AG04450 (cell line): ENCODE measurements at regions of chr3 and their contacts with region 1.

Region 1: DNA sequence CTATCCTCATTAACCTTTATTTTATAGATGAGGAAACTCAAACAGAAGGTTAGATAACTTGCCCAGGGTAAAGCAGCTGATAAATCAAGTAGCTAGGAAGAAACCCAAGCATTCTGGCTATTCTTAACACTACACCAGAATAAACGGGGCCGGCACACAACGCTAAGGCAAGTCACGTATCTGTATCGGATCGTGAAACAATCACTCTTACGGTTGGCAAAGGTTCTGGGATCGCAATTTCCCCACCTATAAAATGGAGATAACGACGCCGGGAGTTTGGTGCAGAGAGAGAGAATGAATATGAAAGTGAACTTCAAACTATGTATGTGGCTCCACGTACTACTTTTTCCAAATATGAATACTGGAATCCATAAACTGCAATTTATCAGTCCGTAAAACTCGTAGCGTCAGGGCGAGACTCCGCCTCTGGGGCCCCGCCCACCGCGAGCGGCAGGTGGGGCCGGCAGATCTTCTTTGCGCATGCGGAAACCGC is 252 bp upstream of the ARMC8 start:
- DNase-seq: peak; percentile 50
- H3K4me3 ChIP-seq: peak overlapping the region; percentile 72
- H3K27ac ChIP-seq: peak overlapping the region; percentile 96
- H3K27me3 ChIP-seq: peaks cover 7% of the 10 kb centered on the region
- CTCF ChIP-seq: no peak

Region 2: DNA sequence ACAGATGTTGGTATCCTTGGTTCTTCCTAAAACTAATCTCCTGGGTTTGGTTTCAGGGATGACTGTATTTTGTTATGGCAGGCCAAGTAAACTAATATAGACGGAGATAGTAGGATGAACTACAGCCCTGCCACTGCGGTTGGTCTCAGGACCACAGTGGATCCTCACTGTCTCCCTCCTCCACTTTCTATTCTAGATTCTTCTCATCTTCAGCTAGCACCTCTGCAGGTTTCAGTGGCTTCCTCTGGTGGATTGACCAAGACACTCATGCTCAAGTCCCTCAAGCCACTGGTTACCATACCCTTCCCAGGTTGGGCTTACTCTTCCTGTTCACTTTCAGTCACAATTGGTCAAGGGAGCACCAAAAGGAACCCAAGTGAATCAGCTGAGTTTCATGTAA is 248.0 kb before region 1 on chr3:
- CTCF ChIA-PET with region 1: no interaction called
- POLR2A ChIA-PET with region 1: no interaction called
- DNase-seq: no peak
- H3K4me3 ChIP-seq: no peak overlapping the region
- H3K27ac ChIP-seq: no peak overlapping the region
- H3K27me3 ChIP-seq: no peaks in the 10 kb centered on the region
- CTCF ChIP-seq: no peak

Region 3: DNA sequence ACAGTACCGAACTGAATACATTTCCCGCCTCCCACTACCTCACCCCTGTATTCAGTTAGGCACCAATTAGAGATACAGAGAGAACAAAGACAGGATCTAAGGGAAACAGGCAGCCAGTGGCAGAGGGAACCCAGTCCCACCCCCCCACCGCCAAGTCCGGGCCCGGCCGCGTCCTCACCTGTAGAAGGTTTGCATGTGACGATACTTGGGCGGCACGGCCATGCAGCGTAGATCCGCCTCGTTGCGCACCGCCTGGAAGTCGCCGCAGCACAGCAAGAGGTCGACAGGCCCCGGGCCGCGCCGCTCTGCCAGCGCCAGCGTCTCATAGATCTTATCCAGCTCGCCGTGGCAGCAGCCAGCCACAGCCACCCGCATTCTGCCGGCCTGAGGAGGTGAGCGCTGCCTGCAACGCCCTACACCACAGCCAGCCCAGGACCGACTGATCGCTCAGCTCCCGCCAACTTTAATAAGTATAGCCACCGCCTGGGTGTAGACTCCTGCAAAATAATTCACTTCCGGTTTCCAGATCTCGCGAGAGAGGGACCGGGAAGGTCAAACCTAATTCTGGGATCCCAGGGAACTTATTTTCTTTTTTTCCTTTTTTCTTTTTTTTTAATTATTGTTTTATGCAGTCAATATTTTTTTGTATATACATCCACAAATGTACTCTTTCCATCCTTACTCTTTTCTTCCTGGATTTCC is 12.3 kb before region 1 on chr3 and contains the start of gene DBR1:
- CTCF ChIA-PET with region 1: interaction called, 4 read pairs
- POLR2A ChIA-PET with region 1: interaction called, 15 read pairs
- DNase-seq: peak; percentile 61
- H3K4me3 ChIP-seq: peak within 1 kb of the TSS; percentile 92
- H3K27ac ChIP-seq: peak within 1 kb of the TSS; percentile 55
- H3K27me3 ChIP-seq: no peaks in the 10 kb centered on the region
- CTCF ChIP-seq: no peak
- polyA plus RNA-seq, gene DBR1: 10.5 and 12.8 TPM in 2 replicates

Region 4: DNA sequence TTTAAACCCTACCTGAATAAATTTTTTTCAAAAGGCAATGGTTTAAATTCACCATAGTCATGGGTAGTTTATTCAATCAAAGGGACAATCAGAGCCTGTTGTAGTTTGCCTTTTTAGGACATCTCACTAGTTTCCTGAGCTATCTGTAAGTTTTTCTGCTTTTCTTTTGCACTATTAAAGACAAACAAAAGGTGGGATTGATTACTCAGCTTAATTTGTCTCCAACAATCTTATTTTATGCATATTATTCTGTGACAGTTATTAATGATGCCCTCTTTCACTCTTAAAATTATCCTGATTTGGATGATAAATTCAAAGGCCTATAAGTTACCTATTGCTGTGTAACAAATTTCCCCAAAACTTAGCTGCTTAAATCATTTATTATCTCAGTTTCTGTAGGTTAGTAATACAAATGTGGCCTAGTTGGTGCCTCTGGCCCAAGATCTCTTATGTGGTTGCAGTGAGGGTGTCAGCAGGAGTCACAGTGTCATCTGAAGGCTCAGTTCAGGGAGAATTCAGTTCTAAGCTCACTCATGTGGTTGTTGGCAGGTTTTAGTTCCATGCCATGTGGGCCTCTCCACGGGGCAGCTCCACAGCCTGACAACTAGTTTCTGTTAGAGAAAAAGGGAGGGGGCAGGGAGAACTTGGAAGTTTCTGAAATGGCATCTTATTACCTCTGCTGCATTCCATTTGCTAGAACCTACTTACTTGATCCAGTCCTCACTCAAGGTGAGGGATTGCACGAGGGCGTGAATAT is 16.3 kb after region 1 on chr3:
- CTCF ChIA-PET with region 1: no interaction called
- POLR2A ChIA-PET with region 1: no interaction called
- DNase-seq: no peak
- H3K4me3 ChIP-seq: no peak overlapping the region
- H3K27ac ChIP-seq: no peak overlapping the region
- H3K27me3 ChIP-seq: no peaks in the 10 kb centered on the region
- CTCF ChIP-seq: no peak

Region 5: DNA sequence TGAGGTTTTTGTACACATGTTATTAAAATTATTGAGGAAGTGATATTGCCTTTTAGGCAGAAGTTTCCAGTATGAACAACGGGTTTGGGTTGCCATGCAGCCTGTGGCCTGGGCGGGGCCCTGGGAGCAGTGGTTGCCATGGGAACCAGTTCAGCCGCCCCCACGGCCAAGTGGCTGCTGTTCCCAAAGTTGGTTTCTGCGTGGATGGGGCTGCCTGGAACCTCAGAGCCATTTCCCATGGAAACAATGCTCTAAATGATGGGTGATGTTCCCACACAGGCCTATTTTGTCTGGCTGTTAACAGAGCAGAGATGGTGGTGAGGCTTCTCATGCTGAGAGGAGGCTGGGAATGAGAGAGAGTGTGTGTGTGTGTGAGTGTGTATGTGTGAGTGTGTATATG is 181.1 kb after region 1 on chr3:
- CTCF ChIA-PET with region 1: no interaction called
- POLR2A ChIA-PET with region 1: no interaction called
- DNase-seq: no peak
- H3K4me3 ChIP-seq: no peak overlapping the region
- H3K27ac ChIP-seq: no peak overlapping the region
- H3K27me3 ChIP-seq: no peaks in the 10 kb centered on the region
- CTCF ChIP-seq: no peak